A549 (cell line): ENCODE measurements at regions of chr2 and their contacts with region 1.

Region 1: GRCh38 chr2:64586883-64587481 is 62.9 kb downstream of the AFTPH start:
- DNase-seq: peak; percentile 60 to 68
- ATAC-seq: peak; percentile 82 to 83
- H3K4me3 ChIP-seq: no peak overlapping the region
- H3K27ac ChIP-seq: no peak overlapping the region
- H3K4me1 ChIP-seq: no peaks in the 10 kb centered on the region
- CTCF ChIP-seq: peak; percentile 91
- EP300 ChIP-seq: no peak
- POLR2A ChIP-seq: no peak
- RAD21 ChIP-seq: peak; percentile 83 to 89

Region 2: DNA sequence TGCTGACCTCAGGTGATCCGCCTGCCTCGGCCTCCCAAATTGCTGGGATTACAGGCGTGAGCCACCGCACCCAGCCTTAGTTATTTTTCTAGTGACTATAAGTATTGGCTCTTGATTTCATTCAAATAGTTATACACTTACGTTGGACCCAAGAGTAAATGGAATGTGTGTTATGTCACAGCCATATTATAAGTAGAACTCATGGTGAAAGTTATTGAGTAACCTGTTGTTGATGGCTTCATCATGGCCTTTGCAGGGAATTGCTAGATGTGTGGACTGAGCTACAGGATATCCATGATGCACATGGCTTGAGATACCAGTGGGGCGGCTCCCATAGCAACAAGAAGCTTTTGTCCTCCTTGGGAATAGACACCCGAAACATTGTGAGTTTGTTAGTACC is 18.1 kb before region 1 on chr2:
- CTCF ChIA-PET with region 1: interaction called, 14 read pairs
- POLR2A ChIA-PET with region 1: no interaction called
- DNase-seq: no peak
- ATAC-seq: no peak
- H3K4me3 ChIP-seq: no peak overlapping the region
- H3K27ac ChIP-seq: no peak overlapping the region
- H3K4me1 ChIP-seq: no peaks in the 10 kb centered on the region
- CTCF ChIP-seq: no peak
- EP300 ChIP-seq: no peak
- POLR2A ChIP-seq: no peak
- RAD21 ChIP-seq: no peak

Region 3: GRCh38 chr2:64609227-64609941 is 22.4 kb after region 1 on chr2:
- CTCF ChIA-PET with region 1: interaction called, 39 read pairs
- POLR2A ChIA-PET with region 1: interaction called, 4 read pairs
- DNase-seq: peak; percentile 80 to 88
- ATAC-seq: peak; percentile 90
- H3K4me3 ChIP-seq: peak overlapping the region; percentile 55
- H3K27ac ChIP-seq: peak overlapping the region; percentile 85 to 97
- H3K4me1 ChIP-seq: 0 out of 3 replicates have a peak, but pooled peaks cover 4% of the 10 kb centered on the region
- CTCF ChIP-seq: peak; percentile 92
- EP300 ChIP-seq: no peak
- POLR2A ChIP-seq: peak; percentile 77; the same call in 1 of the 2 replicates
- RAD21 ChIP-seq: peak; percentile 6 to 65; a peak in 3 of 5 replicates

Region 4: DNA sequence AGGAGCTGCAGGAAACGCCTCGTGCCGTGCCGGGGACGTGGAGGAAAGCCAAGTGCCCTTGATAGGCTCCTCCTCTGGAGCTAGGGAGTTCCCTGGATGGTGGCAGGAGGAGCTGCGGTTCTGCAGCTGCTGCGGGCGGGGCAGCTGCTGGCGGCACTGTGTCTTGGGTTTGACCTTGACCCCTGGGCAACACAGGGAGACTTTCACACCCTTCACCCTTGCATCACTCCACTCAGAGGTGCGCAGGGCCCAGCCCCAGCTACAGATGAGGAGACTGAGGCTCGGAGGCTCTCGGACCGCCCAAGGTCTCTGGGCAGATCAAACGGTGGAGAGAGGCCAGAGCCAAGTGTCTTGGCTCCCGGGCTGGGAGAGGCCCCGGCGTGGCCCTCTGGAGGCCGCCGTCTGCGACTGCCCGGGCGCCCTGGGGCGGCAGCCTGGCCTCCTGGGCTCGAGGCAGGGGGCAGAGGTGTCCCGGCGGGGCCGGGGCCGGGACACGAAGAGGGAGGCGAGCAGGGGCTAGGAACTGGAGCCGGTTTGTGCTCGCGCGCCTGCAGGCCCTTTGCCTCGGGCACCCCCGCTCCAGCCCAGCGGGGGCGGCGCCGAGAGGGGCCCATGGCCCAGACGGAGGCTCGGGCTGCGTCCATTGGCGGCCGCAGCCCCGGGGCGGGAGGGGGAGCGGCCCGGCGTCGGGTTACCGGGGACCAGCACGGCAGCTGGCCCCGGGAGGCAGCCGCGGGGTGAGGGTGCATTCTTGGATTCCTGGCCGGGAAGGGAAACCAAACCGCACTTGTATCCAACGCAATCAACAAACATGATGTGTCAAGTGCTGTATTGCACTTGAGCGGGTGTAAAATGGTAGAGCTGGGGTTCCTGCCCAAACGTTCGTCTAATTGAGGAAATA is 272.6 kb after region 1 on chr2:
- CTCF ChIA-PET with region 1: interaction called, 25 read pairs
- POLR2A ChIA-PET with region 1: interaction called, 6 read pairs
- DNase-seq: peak; percentile 83 to 93
- ATAC-seq: peak; percentile 83 to 89
- H3K4me3 ChIP-seq: peak overlapping the region; percentile 43
- H3K27ac ChIP-seq: peak overlapping the region; percentile 81 to 90
- H3K4me1 ChIP-seq: peaks cover 26% of the 10 kb centered on the region
- CTCF ChIP-seq: peak; percentile 28; the same call in 2 of the 3 replicates
- EP300 ChIP-seq: no peak
- POLR2A ChIP-seq: peak; percentile 59
- RAD21 ChIP-seq: peak; percentile 1 to 22; a peak in 3 of 5 replicates

Region 5: GRCh38 chr2:64873472-64873924 is 286.5 kb after region 1 on chr2:
- CTCF ChIA-PET with region 1: interaction called, 60 read pairs
- POLR2A ChIA-PET with region 1: no interaction called
- DNase-seq: peak; percentile 65 to 73
- ATAC-seq: peak; percentile 83 to 94
- H3K4me3 ChIP-seq: no peak overlapping the region
- H3K27ac ChIP-seq: no peak overlapping the region
- H3K4me1 ChIP-seq: peaks cover 15% of the 10 kb centered on the region
- CTCF ChIP-seq: peak; percentile 95
- EP300 ChIP-seq: no peak
- POLR2A ChIP-seq: no peak
- RAD21 ChIP-seq: peak; percentile 94 to 97